ENCODE measurements at regions of chr16 and their contacts with region 1.

Region 1: DNA sequence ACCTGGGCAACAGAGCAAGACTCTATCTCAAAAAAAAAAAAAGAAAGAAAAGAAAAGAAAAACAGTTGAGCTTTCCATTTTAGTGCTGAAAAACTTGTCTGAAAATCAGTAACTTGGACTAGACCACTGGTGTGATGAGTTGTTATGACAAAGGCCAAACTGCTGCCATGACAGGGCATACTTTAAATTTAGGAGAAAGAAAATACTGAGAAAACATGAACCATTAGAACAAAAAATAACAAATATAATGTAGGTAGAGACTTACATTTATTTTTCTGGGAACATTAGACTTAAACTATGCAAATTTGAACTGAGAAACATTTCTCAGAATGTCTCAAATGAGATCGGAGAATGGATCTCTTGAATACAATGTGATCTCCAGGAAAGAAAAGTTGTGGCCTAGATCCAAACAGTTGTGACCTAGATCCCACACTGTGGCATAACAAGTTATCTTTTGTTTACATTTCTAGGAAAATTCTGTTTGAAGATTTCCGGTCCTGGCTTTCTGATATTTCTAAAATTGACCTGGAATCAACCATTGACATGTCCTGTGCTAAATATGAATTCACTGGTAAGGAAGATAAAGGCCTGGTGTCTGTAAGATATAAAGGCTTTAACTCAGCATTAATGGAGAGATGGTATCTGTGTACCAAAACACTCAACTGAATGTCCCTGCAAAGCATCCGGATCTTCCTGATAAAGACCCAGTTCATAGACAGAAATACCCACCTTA is 10.9 kb downstream of the OGFOD1 start:
- DNase-seq: no peak
- ATAC-seq: no peak
- H3K4me3 ChIP-seq: no peak overlapping the region
- H3K4me3 Mint-ChIP-seq: no peak overlapping the region
- H3K27ac ChIP-seq: no peak overlapping the region
- H3K27ac Mint-ChIP-seq: no peak overlapping the region
- H3K4me1 ChIP-seq: no peaks in the 10 kb centered on the region
- H3K4me1 Mint-ChIP-seq: no peaks in the 10 kb centered on the region
- H3K27me3 ChIP-seq: no peaks in the 10 kb centered on the region
- H3K27me3 Mint-ChIP-seq: no peaks in the 10 kb centered on the region
- CTCF ChIP-seq: no peak

Region 2: DNA sequence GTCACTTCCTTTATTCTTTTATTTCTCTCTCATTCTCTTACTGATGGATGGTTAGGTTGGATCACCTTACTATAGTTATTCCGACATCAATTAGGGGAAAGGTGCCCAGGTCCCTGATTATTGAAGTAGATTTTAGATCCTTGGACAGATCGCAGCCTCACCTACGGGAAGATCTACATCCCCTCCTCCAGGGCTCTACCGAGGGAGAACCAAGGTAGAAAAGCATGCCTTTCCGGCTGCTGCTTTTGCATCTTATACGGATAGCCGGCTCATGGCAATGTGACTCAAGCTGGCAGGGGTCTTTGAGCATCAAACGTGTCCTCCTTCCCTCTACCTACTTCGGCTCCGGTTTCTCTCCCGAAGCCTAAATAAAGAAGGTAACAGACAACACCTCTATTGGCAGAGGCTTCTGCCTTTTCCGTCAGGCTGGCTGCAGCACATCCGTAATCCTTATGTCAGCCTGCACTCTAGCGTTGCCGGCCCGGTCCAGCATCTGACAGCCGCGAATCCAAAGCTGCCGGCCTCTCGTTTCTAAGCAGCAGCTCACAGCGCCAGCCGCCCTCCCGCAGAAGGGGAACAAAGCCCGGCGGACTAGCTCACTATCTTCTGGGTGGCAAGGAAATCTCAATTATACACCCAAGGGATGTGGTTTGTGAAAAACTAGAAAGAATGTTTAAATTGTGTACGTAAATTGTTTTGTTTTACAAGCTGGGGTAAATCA is 1091.3 kb before region 1 on chr16:
- CTCF ChIA-PET with region 1: no interaction called
- POLR2A ChIA-PET with region 1: no interaction called
- intact Hi-C with region 1: no loop called
- DNase-seq: peak; percentile 31
- ATAC-seq: no peak
- H3K4me3 ChIP-seq: no peak overlapping the region
- H3K4me3 Mint-ChIP-seq: peak overlapping the region; percentile 44
- H3K27ac ChIP-seq: no peak overlapping the region
- H3K27ac Mint-ChIP-seq: no peak overlapping the region
- H3K4me1 ChIP-seq: peaks cover 3 to 4% of the 10 kb centered on the region in 2 donors
- H3K4me1 Mint-ChIP-seq: peaks cover 6% of the 10 kb centered on the region
- H3K27me3 ChIP-seq: peaks cover 0 to 15% (median 11%) of the 10 kb centered on the region in 4 experiments
- H3K27me3 Mint-ChIP-seq: peaks cover 40% of the 10 kb centered on the region
- CTCF ChIP-seq: peak; percentile 27

Region 3: DNA sequence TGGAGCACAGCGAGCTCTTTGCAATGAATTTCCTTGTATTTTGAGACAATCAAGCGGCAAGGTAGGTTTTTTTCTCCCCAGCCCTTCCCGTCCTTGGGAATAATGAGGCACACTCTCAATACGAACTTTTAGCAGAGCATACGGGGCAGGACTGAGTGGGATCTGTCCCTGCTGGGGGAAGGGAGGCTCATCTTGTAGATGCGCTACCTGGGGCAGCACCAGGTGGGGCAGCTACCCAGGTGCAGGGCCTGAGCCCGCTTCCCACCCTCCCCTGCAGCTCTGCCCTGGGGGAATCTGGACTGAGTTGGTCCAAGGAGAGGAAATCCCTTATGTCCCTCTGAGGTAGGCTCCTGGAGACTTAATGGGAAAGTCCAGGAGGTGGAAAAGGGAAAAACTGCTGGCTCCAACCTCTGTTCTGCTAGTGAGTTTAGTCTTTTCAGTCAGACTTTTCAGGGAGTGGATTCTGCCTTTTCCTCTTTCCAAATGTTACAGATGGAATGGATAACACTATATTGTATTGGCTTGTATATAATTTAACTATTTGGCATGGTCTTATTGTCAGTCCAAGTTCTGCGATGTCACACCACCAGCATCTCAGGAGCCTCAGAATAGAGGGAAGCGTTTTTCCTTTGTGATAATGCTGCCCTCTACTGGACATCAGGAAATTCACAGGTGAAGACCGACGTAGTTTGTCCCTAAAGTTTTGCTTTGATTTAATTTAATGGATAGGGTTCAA is 619.7 kb before region 1 on chr16:
- CTCF ChIA-PET with region 1: no interaction called
- POLR2A ChIA-PET with region 1: no interaction called
- intact Hi-C with region 1: no loop called
- DNase-seq: peak; percentile 36
- ATAC-seq: no peak
- H3K4me3 ChIP-seq: no peak overlapping the region
- H3K4me3 Mint-ChIP-seq: no peak overlapping the region
- H3K27ac ChIP-seq: no peak overlapping the region
- H3K27ac Mint-ChIP-seq: no peak overlapping the region
- H3K4me1 ChIP-seq: no peaks in the 10 kb centered on the region
- H3K4me1 Mint-ChIP-seq: no peaks in the 10 kb centered on the region
- H3K27me3 ChIP-seq: no peaks in the 10 kb centered on the region
- H3K27me3 Mint-ChIP-seq: peaks cover 12% of the 10 kb centered on the region
- CTCF ChIP-seq: peak; percentile 78

Region 4: GRCh38 chr16:56370877-56371659 is 91.2 kb before region 1 on chr16:
- CTCF ChIA-PET with region 1: no interaction called
- POLR2A ChIA-PET with region 1: no interaction called
- intact Hi-C with region 1: no loop called
- DNase-seq: no peak
- ATAC-seq: no peak
- H3K4me3 ChIP-seq: no peak overlapping the region
- H3K4me3 Mint-ChIP-seq: no peak overlapping the region
- H3K27ac ChIP-seq: no peak overlapping the region
- H3K27ac Mint-ChIP-seq: no peak overlapping the region
- H3K4me1 ChIP-seq: no peaks in the 10 kb centered on the region
- H3K4me1 Mint-ChIP-seq: peaks cover 4% of the 10 kb centered on the region
- H3K27me3 ChIP-seq: no peaks in the 10 kb centered on the region
- H3K27me3 Mint-ChIP-seq: no peaks in the 10 kb centered on the region
- CTCF ChIP-seq: no peak

Region 5: DNA sequence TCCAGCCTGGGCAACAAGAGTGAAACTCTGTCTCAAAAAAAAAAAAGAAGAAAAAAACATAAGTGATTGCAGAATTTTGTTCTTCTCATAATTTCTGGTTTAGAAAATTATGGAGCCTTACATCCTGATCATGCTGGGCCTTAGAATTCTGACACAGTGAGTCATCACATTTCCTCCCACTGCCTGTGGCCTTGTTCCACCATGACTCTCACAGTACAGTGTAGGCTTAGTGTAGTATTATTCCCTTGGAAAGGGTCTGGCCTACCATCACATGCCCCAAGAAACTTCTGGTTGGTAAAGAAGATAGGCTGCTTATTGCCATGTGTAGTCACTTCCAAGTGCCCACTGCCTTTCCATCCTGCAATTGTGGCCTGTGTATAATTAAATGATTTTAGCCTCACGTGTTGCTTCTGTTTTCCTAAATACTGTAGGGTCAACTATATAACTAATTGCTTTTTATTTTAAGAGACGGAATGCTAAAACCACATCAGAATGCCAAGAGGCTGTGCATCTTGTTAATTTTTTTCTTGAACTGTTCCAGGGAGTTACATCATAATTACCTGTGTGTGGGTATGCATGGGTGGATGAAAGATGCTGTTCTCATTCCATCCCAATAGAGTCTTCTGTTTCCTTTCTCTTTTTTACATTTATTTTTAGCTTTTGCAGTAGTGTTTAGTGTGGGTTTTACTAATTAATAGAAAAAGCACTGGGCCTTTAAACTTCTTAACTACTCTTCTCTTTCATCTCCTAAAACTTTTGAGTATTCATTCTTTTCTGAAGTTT is 15.1 kb after region 1 on chr16:
- CTCF ChIA-PET with region 1: no interaction called
- POLR2A ChIA-PET with region 1: interaction called, 14 read pairs
- intact Hi-C with region 1: no loop called
- DNase-seq: no peak
- ATAC-seq: no peak
- H3K4me3 ChIP-seq: no peak overlapping the region
- H3K4me3 Mint-ChIP-seq: no peak overlapping the region
- H3K27ac ChIP-seq: no peak overlapping the region
- H3K27ac Mint-ChIP-seq: no peak overlapping the region
- H3K4me1 ChIP-seq: no peaks in the 10 kb centered on the region
- H3K4me1 Mint-ChIP-seq: no peaks in the 10 kb centered on the region
- H3K27me3 ChIP-seq: no peaks in the 10 kb centered on the region
- H3K27me3 Mint-ChIP-seq: no peaks in the 10 kb centered on the region
- CTCF ChIP-seq: no peak

Measured in B cell (primary cell).